ENCODE measurements at regions of chr14 and their contacts with region 1.

Region 1: DNA sequence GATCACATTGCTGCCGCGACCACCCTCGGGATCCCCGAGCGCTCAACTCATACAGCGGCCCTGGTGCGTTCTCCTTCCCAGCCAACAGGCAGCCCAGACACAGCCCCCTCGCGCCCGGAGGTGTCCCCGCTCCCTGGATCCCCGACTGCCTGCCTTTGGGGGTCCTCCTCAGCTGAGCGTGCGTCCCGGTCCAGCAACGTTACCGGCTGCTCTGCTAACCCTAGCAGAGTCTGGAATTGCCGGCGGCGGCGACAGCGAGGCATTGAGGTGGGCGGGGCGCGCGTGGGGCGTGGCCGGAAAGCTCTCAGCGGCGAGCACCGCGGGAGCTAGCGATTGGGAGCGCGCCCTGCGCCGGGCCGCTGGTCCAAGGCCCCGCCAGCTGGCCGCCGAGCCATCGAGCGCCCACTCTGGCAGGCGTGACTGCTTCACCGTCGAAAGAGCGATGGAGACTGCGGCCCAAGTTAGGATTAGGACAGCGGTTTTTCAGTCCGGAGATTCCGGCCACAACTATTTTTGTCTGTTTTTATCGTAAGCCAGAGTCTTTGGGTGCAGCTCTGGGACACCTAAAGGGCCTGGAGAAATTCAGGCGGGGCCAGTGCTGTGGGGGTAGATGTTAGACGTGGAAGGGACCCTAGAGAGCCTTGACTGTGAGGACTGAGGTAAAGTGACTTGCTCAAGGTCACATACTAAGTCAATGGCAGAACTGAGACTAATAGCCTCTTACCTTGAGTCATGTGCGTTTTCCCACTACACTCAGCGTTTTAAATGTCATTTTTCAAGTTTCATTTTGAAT is at the start of gene HEATR5A:
- DNase-seq: peak; percentile 98
- H3K4me3 Mint-ChIP-seq: peak within 1 kb of the TSS; percentile 94
- H3K27ac Mint-ChIP-seq: peak within 1 kb of the TSS; percentile 95
- H3K4me1 Mint-ChIP-seq: peaks cover 24% of the 10 kb centered on the region
- H3K27me3 Mint-ChIP-seq: peaks cover 2% of the 10 kb centered on the region
- total RNA-seq, gene HEATR5A: 23.6 and 24.2 TPM in 2 replicates

Region 2: DNA sequence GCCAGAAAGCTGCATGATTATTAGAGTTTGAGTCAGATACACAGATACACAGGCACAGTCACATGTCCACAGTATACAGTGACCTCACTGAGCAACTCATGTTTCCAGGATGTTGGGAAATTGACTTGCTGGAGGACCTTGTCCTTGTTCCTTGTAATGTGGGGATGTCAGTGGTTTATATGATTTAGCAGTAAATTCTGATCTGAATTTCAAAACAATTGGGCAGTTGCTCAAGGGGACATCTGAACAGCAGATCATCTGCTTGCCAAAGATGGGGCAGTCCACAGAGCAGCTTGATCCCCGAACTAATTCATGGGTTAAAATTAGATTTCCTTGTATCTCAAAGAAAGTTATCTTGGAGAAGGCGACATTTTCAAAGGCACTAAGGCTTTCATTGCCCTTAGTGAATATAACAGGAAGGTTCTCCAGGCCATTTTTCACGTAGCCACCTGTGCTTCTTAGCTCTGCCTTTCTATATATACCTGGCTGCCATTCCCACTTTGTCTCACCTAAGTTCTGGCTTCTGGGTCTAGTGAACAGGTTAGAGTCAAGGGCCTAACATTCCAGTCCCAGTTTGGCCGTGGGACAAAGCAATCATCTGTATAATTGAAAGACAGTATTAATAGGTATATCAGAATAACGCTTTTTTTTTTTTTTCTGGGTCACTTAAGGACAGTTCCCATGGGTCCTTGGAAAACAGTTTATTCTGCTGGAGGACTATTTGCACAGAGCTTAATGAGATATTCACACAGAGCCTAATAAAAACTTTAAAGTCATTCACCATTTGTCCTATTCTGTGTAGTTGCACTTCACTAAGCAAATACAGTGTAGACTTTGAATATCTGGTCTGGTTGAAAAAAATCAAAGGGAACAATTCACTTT is 329.4 kb before region 1 on chr14:
- intact Hi-C with region 1: no loop called
- DNase-seq: no peak
- H3K4me3 Mint-ChIP-seq: no peak overlapping the region
- H3K27ac Mint-ChIP-seq: no peak overlapping the region
- H3K4me1 Mint-ChIP-seq: no peaks in the 10 kb centered on the region
- H3K27me3 Mint-ChIP-seq: no peaks in the 10 kb centered on the region

Region 3: GRCh38 chr14:31270196-31270772 is 150.2 kb before region 1 on chr14:
- intact Hi-C with region 1: loop called (anchors 1 kb)
- DNase-seq: peak; percentile 68
- H3K4me3 Mint-ChIP-seq: no peak overlapping the region
- H3K27ac Mint-ChIP-seq: no peak overlapping the region
- H3K4me1 Mint-ChIP-seq: peaks cover 5% of the 10 kb centered on the region
- H3K27me3 Mint-ChIP-seq: no peaks in the 10 kb centered on the region

Region 4: GRCh38 chr14:31380106-31380505 is 40.4 kb before region 1 on chr14:
- intact Hi-C with region 1: loop called (anchors 1 kb)
- DNase-seq: no peak
- H3K4me3 Mint-ChIP-seq: no peak overlapping the region
- H3K27ac Mint-ChIP-seq: no peak overlapping the region
- H3K4me1 Mint-ChIP-seq: peaks cover 10% of the 10 kb centered on the region
- H3K27me3 Mint-ChIP-seq: no peaks in the 10 kb centered on the region

Region 5: DNA sequence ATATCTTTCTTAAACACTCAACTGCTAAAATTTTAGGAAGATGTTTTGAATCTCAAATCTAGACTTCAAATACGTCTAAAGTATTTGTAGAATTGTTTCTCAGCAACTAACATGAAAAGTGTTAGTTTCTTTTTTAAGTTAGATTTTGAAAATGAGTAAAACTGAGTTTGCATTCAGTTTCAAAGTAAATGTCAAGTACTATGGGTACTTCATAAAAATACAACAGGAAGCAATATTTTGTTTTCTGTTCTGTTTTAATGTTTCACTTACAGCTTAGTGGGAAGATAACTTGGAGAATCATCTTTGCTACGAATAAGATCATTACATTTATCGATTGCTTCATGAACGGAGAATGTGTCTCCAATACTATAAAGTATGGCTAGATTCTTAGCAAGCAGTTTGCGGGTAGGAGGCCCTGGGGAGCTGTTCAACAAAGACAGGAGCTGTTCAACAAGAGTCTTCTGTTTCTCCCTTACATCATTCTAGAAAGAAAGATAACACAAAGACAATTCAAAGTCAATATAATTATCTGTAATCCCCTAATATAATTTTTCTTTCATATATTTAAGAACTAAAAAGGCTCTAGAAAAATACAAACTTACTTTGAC is 20.4 kb before region 1 on chr14:
- intact Hi-C with region 1: loop called (anchors 1 kb)
- DNase-seq: no peak
- H3K4me3 Mint-ChIP-seq: peak overlapping the region; percentile 28
- H3K27ac Mint-ChIP-seq: peak overlapping the region; percentile 80
- H3K4me1 Mint-ChIP-seq: peaks cover 19% of the 10 kb centered on the region
- H3K27me3 Mint-ChIP-seq: no peaks in the 10 kb centered on the region

Region 6: DNA sequence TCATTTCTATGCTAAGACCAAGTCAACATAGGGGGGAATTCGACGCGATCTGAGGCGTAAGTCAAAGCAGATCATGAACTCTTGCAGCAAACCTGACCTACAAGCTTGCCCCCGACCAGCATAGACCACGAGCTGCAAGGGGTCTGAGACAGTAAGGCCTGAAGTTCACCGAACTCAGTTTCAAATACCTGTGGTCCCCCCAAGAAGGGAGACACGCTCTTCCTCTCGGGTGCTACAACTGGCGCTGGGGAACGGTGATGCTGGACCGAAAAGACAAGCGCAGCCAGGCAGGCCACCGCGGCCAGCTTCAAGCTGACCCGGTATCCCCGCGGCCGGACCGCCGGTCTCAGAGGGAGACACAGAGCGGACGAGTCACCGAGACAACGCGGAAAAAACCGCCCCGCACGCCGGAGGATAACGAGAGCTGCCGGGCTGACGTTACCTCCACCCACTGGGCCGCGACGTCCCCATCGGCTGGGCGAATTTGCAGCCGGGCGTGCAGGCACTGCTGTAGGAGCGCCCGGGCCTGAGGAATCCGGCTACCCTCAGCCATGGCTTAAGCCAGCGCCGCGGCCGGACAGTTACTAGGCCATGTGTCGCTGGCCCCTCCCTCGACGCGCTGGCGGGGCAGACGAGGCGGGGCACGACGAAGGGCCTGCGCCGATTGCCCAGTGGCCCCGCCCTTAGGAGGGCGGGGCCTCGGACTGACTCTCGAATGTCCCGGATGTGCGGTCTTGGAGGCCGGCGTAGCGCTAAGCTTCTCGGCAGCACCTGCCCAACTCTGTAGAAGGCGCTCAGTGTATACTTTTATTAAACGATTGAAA is 36.5 kb after region 1 on chr14 and contains the start of gene DTD2:
- intact Hi-C with region 1: loop called (anchors 1 kb)
- DNase-seq: peak; percentile 97
- H3K4me3 Mint-ChIP-seq: peak within 1 kb of the TSS; percentile 95
- H3K27ac Mint-ChIP-seq: peak within 1 kb of the TSS; percentile 98
- H3K4me1 Mint-ChIP-seq: peaks cover 24% of the 10 kb centered on the region
- H3K27me3 Mint-ChIP-seq: peaks cover 4% of the 10 kb centered on the region
- total RNA-seq, gene DTD2: 30.8 and 32.2 TPM in 2 replicates